RWPE1 (cell line): ENCODE measurements at regions of chr1 and their contacts with region 1.

Region 1: DNA sequence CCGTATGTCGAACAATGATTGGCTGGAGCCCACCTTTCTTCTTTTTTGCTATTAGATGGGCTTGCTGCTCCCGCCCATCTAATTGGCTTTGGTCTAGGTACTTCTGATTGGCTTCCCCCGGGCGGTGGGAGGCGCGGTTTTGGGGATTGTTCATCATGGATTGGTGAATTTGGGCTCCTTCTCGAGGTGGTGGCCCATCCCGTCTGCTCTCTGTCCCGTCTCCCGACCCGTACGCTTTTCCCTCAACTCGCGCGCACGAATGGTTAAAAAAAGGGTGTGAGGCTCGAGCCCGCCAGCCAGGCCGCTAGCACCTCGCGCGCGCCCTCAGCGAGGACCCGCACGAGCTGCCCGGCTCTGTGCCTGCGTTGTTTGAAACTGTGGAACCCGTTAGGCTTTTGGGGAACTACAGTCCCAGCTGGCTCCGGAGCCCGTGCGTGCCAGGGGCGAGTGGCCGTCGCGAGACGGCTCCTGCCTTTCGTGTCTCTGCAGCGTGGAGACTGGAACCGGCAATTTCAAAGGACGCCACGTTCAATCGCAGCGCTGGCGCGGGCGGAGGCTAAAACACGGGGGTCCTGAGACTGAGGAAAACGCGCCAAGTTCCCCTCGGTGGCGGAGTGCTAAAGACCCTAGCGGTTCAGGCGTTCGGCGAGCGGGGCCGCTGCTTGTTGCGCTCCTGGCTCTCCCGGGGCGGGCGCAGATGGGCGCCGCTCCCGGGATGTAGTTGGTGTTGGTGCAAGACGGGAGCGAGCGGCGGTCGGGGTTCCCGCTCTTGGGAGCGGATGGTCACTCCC is at the start of gene USP1:
- DNase-seq: peak; percentile 97
- H3K27ac ChIP-seq: peak within 1 kb of the TSS; percentile 100
- CTCF ChIP-seq: no peak

Region 2: DNA sequence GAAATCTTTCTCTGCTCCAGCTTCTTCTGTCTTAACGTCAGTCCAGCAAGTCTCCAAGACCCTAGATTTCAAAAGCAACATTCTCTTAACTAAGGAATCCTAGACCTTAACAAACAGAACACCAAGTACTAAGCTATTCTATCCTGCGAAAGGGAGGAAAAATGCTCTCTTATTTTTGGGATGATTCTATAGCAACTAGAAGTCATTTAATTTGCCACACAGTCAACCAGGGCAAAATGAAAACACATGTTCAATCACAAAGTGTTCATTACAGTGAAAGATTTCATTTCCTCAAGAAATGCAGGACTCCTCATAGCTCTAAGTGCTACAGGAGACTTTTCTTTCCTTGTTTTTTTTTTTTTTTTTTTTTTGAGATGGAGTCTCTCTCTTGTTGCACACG is 287.8 kb after region 1 on chr1:
- CTCF ChIA-PET with region 1: no interaction called
- POLR2A ChIA-PET with region 1: interaction called, 10 read pairs
- DNase-seq: no peak
- H3K27ac ChIP-seq: no peak overlapping the region
- CTCF ChIP-seq: no peak